Ovary (tissue), 10 donors: ENCODE measurements at regions of chr16 and their contacts with region 1.

Region 1: GRCh38 chr16:70342016-70342415 is 4.7 kb upstream of the DDX19A start:
- DNase-seq: no peak
- H3K4me3 ChIP-seq: no peak overlapping the region
- H3K27ac ChIP-seq: no peak overlapping the region
- H3K4me1 ChIP-seq: peaks cover 5% of the 10 kb centered on the region
- H3K27me3 ChIP-seq: no peaks in the 10 kb centered on the region
- CTCF ChIP-seq: no peak
- EP300 ChIP-seq: no peak
- POLR2A ChIP-seq: no peak

Region 2: DNA sequence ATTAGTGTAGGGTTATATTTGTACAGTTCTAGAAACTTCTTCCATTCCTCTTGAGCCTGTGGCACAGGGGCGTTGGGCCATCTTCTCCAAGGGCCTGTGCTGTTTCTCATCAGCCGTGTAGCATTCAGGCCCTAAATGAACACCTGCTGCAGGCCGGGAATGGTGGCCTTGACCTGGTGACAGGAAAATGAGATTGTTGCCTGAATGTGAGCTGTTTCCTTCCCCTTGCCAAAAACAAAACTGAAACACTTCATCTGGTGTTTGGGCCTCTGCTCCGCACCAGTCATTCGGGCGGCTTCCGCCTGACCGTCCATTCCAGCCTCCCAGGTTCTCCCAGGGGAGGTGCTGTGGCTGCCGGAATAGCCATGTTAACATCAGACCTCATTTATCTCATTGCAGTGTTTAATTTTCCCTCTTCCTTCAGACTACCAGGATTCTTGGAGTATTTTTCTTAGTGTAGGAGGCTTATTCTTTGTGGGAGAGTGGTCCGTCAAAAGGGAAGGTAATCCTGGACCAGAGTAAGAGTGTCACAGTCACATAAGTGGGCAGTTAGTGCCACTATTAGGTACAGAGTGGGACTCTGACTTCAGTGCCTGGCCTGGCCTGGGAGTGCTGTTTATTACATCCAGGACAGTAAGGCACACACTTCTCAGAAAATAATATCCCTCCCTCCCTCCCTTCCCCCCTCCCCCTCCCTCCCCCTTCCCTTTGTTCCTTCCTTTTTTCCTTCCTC is 518.0 kb before region 1 on chr16:
- intact Hi-C with region 1: no loop called
- DNase-seq: peak; percentile 85 to 89 (median 87)
- H3K4me3 ChIP-seq: no peak overlapping the region
- H3K27ac ChIP-seq: peak overlapping the region; percentile 53 to 87
- H3K4me1 ChIP-seq: peaks cover 7% of the 10 kb centered on the region
- H3K27me3 ChIP-seq: no peaks in the 10 kb centered on the region
- CTCF ChIP-seq: no peak
- EP300 ChIP-seq: no peak
- POLR2A ChIP-seq: no peak

Region 3: GRCh38 chr16:70289229-70290098 is 52.6 kb before region 1 on chr16 and contains the start of gene AARS1:
- intact Hi-C with region 1: loop called in 2 of 4 experiments (anchors 10 kb)
- DNase-seq: peak; percentile 94 to 97 (median 95)
- H3K4me3 ChIP-seq: peak within 1 kb of the TSS; percentile 92
- H3K27ac ChIP-seq: peak within 1 kb of the TSS; percentile 56 to 65
- H3K4me1 ChIP-seq: peaks cover 4% of the 10 kb centered on the region
- H3K27me3 ChIP-seq: no peaks in the 10 kb centered on the region
- CTCF ChIP-seq: peak in 1 of 3 donors; percentile 7
- EP300 ChIP-seq: no peak
- POLR2A ChIP-seq: peak; percentile 92
- total RNA-seq, gene AARS1: 26.7 to 280 (median 60.3) TPM

Region 4: DNA sequence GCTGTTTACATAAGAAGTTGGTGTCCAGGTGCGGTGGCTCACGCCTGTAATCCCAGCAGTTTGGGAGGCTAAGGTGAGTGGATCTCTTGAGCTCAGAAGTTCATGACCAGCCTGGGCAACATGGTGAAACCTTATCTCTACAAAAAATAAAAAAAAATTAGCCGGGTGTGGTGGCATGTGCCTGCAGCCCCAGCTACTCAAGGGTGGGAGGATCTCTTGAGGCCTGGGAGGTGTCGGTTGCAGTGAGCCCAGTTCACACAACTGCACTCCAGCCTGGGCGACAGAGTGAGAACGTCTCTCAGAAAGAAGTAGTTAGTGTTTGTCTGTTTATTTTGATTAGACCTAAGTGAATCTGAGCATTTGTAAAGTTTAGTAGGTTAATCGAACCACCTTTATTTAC is 17.5 kb after region 1 on chr16:
- intact Hi-C with region 1: no loop called
- DNase-seq: no peak
- H3K4me3 ChIP-seq: no peak overlapping the region
- H3K27ac ChIP-seq: no peak overlapping the region
- H3K4me1 ChIP-seq: no peaks in the 10 kb centered on the region
- H3K27me3 ChIP-seq: no peaks in the 10 kb centered on the region
- CTCF ChIP-seq: no peak
- EP300 ChIP-seq: no peak
- POLR2A ChIP-seq: no peak

Region 5: DNA sequence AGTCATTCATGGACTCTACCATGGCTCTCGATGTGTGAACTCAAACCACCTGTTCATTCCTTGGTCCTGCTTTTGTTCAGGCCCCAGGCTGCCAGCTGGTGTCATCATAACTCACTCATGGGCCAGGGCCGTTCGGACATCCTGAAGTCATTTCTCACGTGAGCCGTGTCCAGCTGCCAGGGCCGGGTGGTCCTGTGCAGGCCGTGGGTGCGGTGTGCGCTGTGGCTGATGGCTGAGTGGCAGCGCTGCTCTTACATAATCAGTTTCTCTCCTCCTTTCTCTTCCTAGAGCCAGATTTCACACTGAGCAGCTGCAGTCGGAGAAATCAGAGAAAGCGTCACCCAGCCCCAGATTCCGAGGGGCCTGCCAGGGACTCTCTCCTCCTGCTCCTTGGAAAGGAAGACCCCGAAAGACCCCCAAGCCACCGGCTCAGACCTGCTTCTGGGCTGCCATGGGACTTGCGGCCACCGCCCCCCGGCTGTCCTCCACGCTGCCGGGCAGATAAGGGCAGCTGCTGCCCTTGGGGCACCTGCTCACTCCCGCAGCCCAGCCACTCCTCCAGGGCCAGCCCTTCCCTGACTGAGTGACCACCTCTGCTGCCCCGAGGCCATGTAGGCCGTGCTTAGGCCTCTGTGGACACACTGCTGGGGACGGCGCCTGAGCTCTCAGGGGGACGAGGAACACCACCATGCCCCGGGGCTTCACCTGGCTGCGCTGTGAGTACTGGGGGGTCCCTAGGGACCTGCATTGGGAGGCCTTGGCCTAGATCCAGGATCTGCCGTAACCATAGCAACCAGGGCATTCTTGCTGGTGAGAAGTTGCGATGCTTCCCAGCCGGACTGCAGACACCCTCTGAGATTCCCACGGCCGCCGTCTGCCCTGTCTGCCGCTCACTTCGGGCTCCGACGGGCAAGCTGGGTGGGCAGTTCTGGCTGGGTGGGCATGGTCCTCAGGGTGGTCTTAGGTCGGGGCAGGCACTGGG is 304.5 kb after region 1 on chr16 and contains the start of gene IL34:
- intact Hi-C with region 1: loop called in 1 of 4 experiments (anchors 10 kb)
- DNase-seq: peak; percentile 24 to 75 (median 61)
- H3K4me3 ChIP-seq: no peak within 1 kb of the TSS
- H3K27ac ChIP-seq: no peak within 1 kb of the TSS
- H3K4me1 ChIP-seq: peaks cover 9% of the 10 kb centered on the region
- H3K27me3 ChIP-seq: no peaks in the 10 kb centered on the region
- CTCF ChIP-seq: no peak
- EP300 ChIP-seq: no peak
- POLR2A ChIP-seq: no peak
- total RNA-seq, gene IL34: 0.91 to 4.0 (median 1.9) TPM